Activated CD8-positive, alpha-beta T cell treated with anti-CD3 and anti-CD28 coated beads, Interleukin-2, amount 10 ng/mL, durations not matched to agents 7 days and 5 days (primary cell): ENCODE measurements at regions of chr17 and their contacts with region 1.

Region 1: DNA sequence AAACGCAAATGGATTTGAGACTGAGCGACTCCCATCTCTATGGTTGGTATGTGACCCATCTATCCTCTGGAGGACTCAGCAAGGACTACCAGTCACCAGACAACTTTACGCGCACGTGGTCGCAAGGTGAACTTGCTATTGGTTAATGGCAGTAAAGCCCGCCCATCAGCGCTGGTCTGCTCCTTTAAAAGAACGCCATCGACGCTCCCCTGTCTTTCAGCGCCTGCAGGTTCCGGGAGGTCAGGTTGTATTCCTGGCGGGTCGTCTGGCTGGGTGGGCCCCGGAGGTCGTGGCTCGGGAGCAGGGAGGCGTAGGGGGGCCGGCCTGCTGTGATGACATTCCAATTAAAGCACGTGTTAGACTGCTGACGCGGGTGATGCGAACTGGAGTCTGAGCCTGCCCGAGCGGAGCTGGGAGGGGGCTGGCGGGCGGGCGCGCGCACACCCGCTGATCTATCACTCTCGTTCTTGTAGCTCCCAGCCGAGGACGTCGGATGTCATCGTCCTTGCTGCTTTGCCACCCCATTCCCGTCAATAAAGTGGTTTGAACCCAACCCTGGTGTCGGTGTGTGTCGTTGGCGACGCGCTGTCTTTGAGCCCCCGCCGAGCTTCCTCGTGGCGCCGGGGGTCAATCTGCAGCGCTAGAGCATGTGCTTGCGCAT is 15.9 kb upstream of the ERN1 start:
- DNase-seq: peak; percentile 98
- ATAC-seq: peak; percentile 96
- H3K4me3 Mint-ChIP-seq: no peak overlapping the region
- H3K27ac Mint-ChIP-seq: no peak overlapping the region
- H3K4me1 Mint-ChIP-seq: peaks cover 26% of the 10 kb centered on the region
- H3K27me3 Mint-ChIP-seq: no peaks in the 10 kb centered on the region

Region 2: GRCh38 chr17:64020056-64020766 is 125.7 kb before region 1 on chr17 and contains the start of gene ICAM2:
- CTCF ChIA-PET with region 1: interaction called, 12 read pairs
- POLR2A ChIA-PET with region 1: interaction called, 14 read pairs
- DNase-seq: peak; percentile 96
- ATAC-seq: peak; percentile 78
- H3K4me3 Mint-ChIP-seq: peak within 1 kb of the TSS; percentile 96
- H3K27ac Mint-ChIP-seq: peak within 1 kb of the TSS; percentile 100
- H3K4me1 Mint-ChIP-seq: peaks cover 75% of the 10 kb centered on the region
- H3K27me3 Mint-ChIP-seq: no peaks in the 10 kb centered on the region
- total RNA-seq, gene ICAM2: 48.4 to 51.3 TPM

Region 3: GRCh38 chr17:64155751-64156544 is 10.1 kb after region 1 on chr17:
- CTCF ChIA-PET with region 1: no interaction called
- POLR2A ChIA-PET with region 1: interaction called, 16 read pairs
- DNase-seq: no peak
- ATAC-seq: no peak
- H3K4me3 Mint-ChIP-seq: no peak overlapping the region
- H3K27ac Mint-ChIP-seq: peak overlapping the region; percentile 8
- H3K4me1 Mint-ChIP-seq: no peaks in the 10 kb centered on the region
- H3K27me3 Mint-ChIP-seq: no peaks in the 10 kb centered on the region

Region 4: DNA sequence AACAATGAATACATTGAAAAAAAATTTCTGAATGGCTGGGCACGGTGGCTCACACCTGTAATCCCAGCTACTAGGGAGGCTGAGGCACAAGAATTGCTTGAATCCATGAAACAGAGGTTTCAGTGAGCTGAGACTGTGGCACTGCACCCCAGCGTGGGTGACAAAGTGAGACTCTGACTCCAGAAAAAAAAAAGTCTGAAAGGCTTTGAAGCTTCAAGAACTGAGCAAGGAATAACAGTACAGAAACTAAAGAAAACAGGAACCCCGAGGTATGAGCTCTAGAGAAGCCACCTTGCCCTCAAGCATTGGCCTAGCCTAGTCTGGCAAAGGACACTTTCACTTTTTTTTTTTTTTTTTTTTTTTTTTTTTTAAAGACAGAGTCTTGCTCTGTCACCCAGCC is 72.2 kb after region 1 on chr17:
- CTCF ChIA-PET with region 1: no interaction called
- POLR2A ChIA-PET with region 1: no interaction called
- DNase-seq: no peak
- ATAC-seq: no peak
- H3K4me3 Mint-ChIP-seq: no peak overlapping the region
- H3K27ac Mint-ChIP-seq: no peak overlapping the region
- H3K4me1 Mint-ChIP-seq: peaks cover 12% of the 10 kb centered on the region
- H3K27me3 Mint-ChIP-seq: no peaks in the 10 kb centered on the region

Region 5: GRCh38 chr17:64262417-64263260 is 116.8 kb after region 1 on chr17 and contains the start of gene TEX2:
- CTCF ChIA-PET with region 1: interaction called, 3 read pairs
- POLR2A ChIA-PET with region 1: interaction called, 24 read pairs
- DNase-seq: peak; percentile 80
- ATAC-seq: peak; percentile 49
- H3K4me3 Mint-ChIP-seq: peak within 1 kb of the TSS; percentile 81
- H3K27ac Mint-ChIP-seq: peak within 1 kb of the TSS; percentile 85
- H3K4me1 Mint-ChIP-seq: peaks cover 27% of the 10 kb centered on the region
- H3K27me3 Mint-ChIP-seq: peaks cover 14% of the 10 kb centered on the region
- total RNA-seq, gene TEX2: 16.1 to 16.2 TPM

Region 6: DNA sequence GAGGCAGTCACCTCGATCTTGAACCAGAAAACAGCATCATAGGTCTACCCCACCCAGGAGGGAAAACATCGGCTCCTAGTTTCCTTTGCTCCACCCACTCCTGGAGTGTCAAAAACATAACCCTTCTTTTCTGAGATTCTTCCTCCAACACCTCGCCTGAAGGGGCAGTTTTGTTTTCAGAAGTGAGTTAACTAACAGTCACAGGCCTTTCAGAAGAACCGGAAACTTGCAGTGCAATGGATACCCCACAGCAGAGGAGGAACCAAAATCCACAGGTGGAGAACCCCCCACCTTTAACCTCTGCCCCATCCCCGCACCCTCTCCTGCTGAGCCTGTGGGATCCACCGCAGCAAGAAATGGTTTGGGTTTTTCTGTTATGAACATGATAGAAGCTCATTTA is 125.0 kb after region 1 on chr17:
- CTCF ChIA-PET with region 1: interaction called, 4 read pairs
- POLR2A ChIA-PET with region 1: interaction called, 14 read pairs
- DNase-seq: no peak
- ATAC-seq: peak; percentile 47
- H3K4me3 Mint-ChIP-seq: peak overlapping the region; percentile 19
- H3K27ac Mint-ChIP-seq: peak overlapping the region; percentile 75
- H3K4me1 Mint-ChIP-seq: peaks cover 27% of the 10 kb centered on the region
- H3K27me3 Mint-ChIP-seq: peaks cover 14% of the 10 kb centered on the region

Region 7: GRCh38 chr17:64281962-64282727 is 136.3 kb after region 1 on chr17:
- CTCF ChIA-PET with region 1: interaction called, 17 read pairs
- POLR2A ChIA-PET with region 1: interaction called, 7 read pairs
- DNase-seq: peak; percentile 69
- ATAC-seq: peak; percentile 55
- H3K4me3 Mint-ChIP-seq: no peak overlapping the region
- H3K27ac Mint-ChIP-seq: no peak overlapping the region
- H3K4me1 Mint-ChIP-seq: peaks cover 6% of the 10 kb centered on the region
- H3K27me3 Mint-ChIP-seq: no peaks in the 10 kb centered on the region

Region 8: GRCh38 chr17:64291254-64291851 is 145.5 kb after region 1 on chr17:
- CTCF ChIA-PET with region 1: interaction called, 16 read pairs
- POLR2A ChIA-PET with region 1: interaction called, 5 read pairs
- DNase-seq: peak; percentile 29
- ATAC-seq: no peak
- H3K4me3 Mint-ChIP-seq: no peak overlapping the region
- H3K27ac Mint-ChIP-seq: no peak overlapping the region
- H3K4me1 Mint-ChIP-seq: no peaks in the 10 kb centered on the region
- H3K27me3 Mint-ChIP-seq: peaks cover 3% of the 10 kb centered on the region

Region 9: GRCh38 chr17:64306850-64307463 is 161.1 kb after region 1 on chr17:
- CTCF ChIA-PET with region 1: no interaction called
- POLR2A ChIA-PET with region 1: no interaction called
- DNase-seq: peak; percentile 81
- ATAC-seq: peak; percentile 87
- H3K4me3 Mint-ChIP-seq: no peak overlapping the region
- H3K27ac Mint-ChIP-seq: no peak overlapping the region
- H3K4me1 Mint-ChIP-seq: no peaks in the 10 kb centered on the region
- H3K27me3 Mint-ChIP-seq: no peaks in the 10 kb centered on the region